Natural killer cell (primary cell): ENCODE measurements at regions of chr14 and their contacts with region 1.

Region 1: DNA sequence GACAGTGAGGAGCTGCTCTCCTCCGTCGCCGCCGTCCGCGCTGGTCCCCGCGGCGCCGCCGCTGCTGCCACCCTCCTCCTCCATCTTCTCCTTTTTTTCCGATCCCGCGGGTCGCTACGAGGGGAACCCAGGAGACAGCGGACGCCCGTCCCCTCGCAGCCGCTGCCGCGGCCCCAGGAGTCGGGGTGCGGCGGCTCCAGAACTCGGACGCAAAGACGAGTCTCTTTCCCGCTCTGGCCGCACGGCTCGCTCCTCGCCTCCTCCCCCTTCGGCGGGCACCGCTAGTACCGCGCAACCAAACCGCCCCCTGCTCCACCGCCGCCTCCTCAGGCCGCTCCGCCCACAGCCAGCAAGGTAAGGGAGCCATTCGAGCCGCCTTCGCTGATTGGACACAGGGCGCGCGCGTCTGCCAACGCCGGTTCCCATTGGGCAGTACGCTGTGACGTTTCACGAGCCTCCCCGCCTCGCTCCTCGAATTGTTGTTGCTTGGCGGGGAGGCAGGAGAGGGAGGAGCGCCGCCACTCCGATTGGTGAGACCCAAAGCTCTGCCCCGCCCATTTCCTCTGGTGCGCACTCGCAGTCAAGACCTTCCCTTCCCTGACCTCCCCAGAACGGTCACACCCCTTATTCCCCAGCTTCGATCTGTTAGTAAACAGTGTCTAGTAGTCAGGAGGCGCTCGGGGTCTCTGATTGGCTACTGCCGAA is at the start of gene RPS6KA5:
- DNase-seq: peak; percentile 98 to 100
- ATAC-seq: peak; percentile 81 to 91 (median 82)
- H3K4me3 ChIP-seq: peak within 1 kb of the TSS; percentile 79
- H3K4me3 Mint-ChIP-seq: peak within 1 kb of the TSS; percentile 82
- H3K27ac ChIP-seq: peak within 1 kb of the TSS; percentile 93
- H3K27ac Mint-ChIP-seq: no peak within 1 kb of the TSS
- H3K4me1 ChIP-seq: peaks cover 39% of the 10 kb centered on the region
- H3K4me1 Mint-ChIP-seq: peaks cover 37 to 51% of the 10 kb centered on the region in 2 donors
- H3K27me3 ChIP-seq: no peaks in the 10 kb centered on the region
- H3K27me3 Mint-ChIP-seq: no peaks in the 10 kb centered on the region
- CTCF ChIP-seq: no peak
- total RNA-seq, gene RPS6KA5: 24.1 to 28.5 (median 27.9) TPM

Region 2: GRCh38 chr14:89954070-89955028 is 1106.2 kb before region 1 on chr14 and contains the start of gene EFCAB11:
- intact Hi-C with region 1: loop called (anchors 10 kb)
- DNase-seq: peak; percentile 93 to 98
- ATAC-seq: peak; percentile 77 to 92 (median 78)
- H3K4me3 ChIP-seq: peak within 1 kb of the TSS; percentile 59
- H3K4me3 Mint-ChIP-seq: peak within 1 kb of the TSS; percentile 99
- H3K27ac ChIP-seq: peak within 1 kb of the TSS; percentile 98
- H3K27ac Mint-ChIP-seq: peak within 1 kb of the TSS; percentile 97
- H3K4me1 ChIP-seq: peaks cover 24% of the 10 kb centered on the region
- H3K4me1 Mint-ChIP-seq: peaks cover 40 to 46% of the 10 kb centered on the region in 2 donors
- H3K27me3 ChIP-seq: no peaks in the 10 kb centered on the region
- H3K27me3 Mint-ChIP-seq: no peaks in the 10 kb centered on the region
- CTCF ChIP-seq: no peak
- total RNA-seq, gene EFCAB11: 3.9 to 5.2 (median 4.0) TPM

Region 3: GRCh38 chr14:90827916-90828610 is 232.4 kb before region 1 on chr14:
- intact Hi-C with region 1: loop called (anchors 10 kb)
- DNase-seq: peak; percentile 92
- ATAC-seq: peak; percentile 97 to 99 (median 98)
- H3K4me3 ChIP-seq: peak overlapping the region; percentile 39
- H3K4me3 Mint-ChIP-seq: peak overlapping the region; percentile 85
- H3K27ac ChIP-seq: peak overlapping the region; percentile 90
- H3K27ac Mint-ChIP-seq: peak overlapping the region; percentile 93
- H3K4me1 ChIP-seq: peaks cover 17% of the 10 kb centered on the region
- H3K4me1 Mint-ChIP-seq: peaks cover 17 to 24% of the 10 kb centered on the region in 2 donors
- H3K27me3 ChIP-seq: no peaks in the 10 kb centered on the region
- H3K27me3 Mint-ChIP-seq: no peaks in the 10 kb centered on the region
- CTCF ChIP-seq: no peak

Region 4: GRCh38 chr14:91114079-91115065 is 53.9 kb after region 1 on chr14:
- intact Hi-C with region 1: loop called (anchors 1 kb)
- DNase-seq: peak; percentile 57 to 86
- ATAC-seq: peak; percentile 77 to 85 (median 82)
- H3K4me3 ChIP-seq: peak overlapping the region; percentile 70
- H3K4me3 Mint-ChIP-seq: peak overlapping the region; percentile 91
- H3K27ac ChIP-seq: peak overlapping the region; percentile 94
- H3K27ac Mint-ChIP-seq: peak overlapping the region; percentile 96
- H3K4me1 ChIP-seq: peaks cover 49% of the 10 kb centered on the region
- H3K4me1 Mint-ChIP-seq: peaks cover 70 to 77% of the 10 kb centered on the region in 2 donors
- H3K27me3 ChIP-seq: no peaks in the 10 kb centered on the region
- H3K27me3 Mint-ChIP-seq: no peaks in the 10 kb centered on the region
- CTCF ChIP-seq: no peak

Region 5: GRCh38 chr14:91244501-91244901 is 184.0 kb after region 1 on chr14 and contains the start of gene GPR68:
- intact Hi-C with region 1: loop called (anchors 5 kb)
- DNase-seq: peak in 1 of 2 donors; percentile 68
- ATAC-seq: no peak
- H3K4me3 ChIP-seq: peak within 1 kb of the TSS; percentile 70
- H3K4me3 Mint-ChIP-seq: peak within 1 kb of the TSS; percentile 88
- H3K27ac ChIP-seq: peak within 1 kb of the TSS; percentile 92
- H3K27ac Mint-ChIP-seq: peak within 1 kb of the TSS; percentile 86 to 90
- H3K4me1 ChIP-seq: peaks cover 93% of the 10 kb centered on the region
- H3K4me1 Mint-ChIP-seq: peaks cover 75 to 77% of the 10 kb centered on the region in 2 donors
- H3K27me3 ChIP-seq: no peaks in the 10 kb centered on the region
- H3K27me3 Mint-ChIP-seq: no peaks in the 10 kb centered on the region
- CTCF ChIP-seq: no peak
- total RNA-seq, gene GPR68: 7.6 to 24.0 (median 15.7) TPM

Region 6: GRCh38 chr14:91418387-91419043 is 358.0 kb after region 1 on chr14:
- intact Hi-C with region 1: loop called (anchors 5 kb)
- DNase-seq: peak; percentile 81 to 92
- ATAC-seq: peak; percentile 32 to 61 (median 36)
- H3K4me3 ChIP-seq: peak overlapping the region; percentile 27
- H3K4me3 Mint-ChIP-seq: peak overlapping the region; percentile 55
- H3K27ac ChIP-seq: peak overlapping the region; percentile 70
- H3K27ac Mint-ChIP-seq: peak overlapping the region; percentile 80 to 99
- H3K4me1 ChIP-seq: peaks cover 37% of the 10 kb centered on the region
- H3K4me1 Mint-ChIP-seq: peaks cover 39 to 45% of the 10 kb centered on the region in 2 donors
- H3K27me3 ChIP-seq: no peaks in the 10 kb centered on the region
- H3K27me3 Mint-ChIP-seq: no peaks in the 10 kb centered on the region
- CTCF ChIP-seq: peak; percentile 98